H1 (cell line): ENCODE measurements at regions of chr1 and their contacts with region 1.

Region 1: DNA sequence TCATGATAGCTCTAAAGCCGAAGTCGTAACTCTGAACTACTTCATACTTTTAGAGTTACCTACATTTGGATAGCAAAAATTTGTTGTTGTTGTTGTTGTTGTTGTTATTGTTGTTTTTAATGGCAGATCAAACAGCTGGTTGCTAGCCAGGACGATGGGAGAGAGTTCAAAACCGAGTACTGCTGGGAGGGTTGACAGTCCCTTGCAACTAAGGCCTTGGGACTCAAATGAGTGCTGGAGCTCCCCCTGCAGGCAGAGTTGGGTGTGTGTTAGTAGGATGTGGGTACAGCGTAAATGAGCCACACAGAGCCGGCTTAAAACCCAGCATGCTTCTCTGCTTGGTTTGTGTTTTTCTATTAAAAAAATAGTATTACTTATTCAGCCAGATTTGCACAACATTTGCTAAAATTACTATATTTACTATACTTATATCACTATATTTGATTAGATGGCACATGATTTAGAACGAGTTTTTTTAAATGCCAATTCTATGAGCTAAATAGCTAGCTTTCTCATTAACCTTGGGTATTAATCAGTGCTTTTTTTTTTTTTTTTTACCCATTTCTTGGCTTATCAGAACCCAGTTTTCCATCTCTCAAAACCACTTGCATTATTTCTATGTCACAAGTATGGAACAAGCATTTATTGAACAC is 129.2 kb upstream of the SYT6 start:
- DNase-seq: peak; percentile 70 to 93
- H3K4me3 ChIP-seq: no peak overlapping the region
- H3K27ac ChIP-seq: no peak overlapping the region
- H3K4me1 ChIP-seq: peaks cover 0 to 9% (median 2%) of the 10 kb centered on the region in 4 experiments; a peak in 3 of 7 replicates
- H3K27me3 ChIP-seq: no peaks in the 10 kb centered on the region
- CTCF ChIP-seq: peak; percentile 86 to 95 (median 93)
- EP300 ChIP-seq: no peak
- POLR2A ChIP-seq: no peak
- RAD21 ChIP-seq: peak; percentile 90 to 95

Region 2: DNA sequence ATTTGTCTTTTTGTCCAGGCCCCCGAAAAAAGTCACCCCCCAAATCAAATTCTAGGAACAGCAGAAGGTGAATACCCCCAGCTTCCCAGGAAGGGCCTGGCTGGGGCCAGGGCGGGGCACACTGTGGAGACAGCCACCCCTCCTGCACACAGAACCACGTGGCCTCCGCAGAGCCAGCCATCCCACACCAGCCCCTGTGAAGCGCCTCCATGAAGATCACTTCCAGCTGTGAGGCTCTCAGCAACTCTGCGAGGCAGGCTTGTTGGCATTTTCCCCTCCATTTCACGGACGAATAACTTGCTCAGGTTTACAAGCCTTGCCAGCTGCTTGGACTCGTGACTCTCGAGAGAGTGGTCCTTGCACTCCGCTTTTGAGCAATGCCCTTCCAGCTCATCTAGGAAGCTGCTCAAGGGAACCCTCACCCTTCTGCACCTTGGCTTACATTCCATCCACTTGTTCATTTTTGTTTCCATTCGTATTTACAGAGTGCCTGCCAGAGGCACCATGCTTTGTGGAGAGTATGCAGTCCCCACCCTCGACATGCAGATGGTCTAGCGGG is 177.4 kb before region 1 on chr1:
- CTCF ChIA-PET with region 1: interaction called, 10 read pairs
- POLR2A ChIA-PET with region 1: no interaction called
- DNase-seq: no peak
- H3K4me3 ChIP-seq: no peak overlapping the region
- H3K27ac ChIP-seq: no peak overlapping the region
- H3K4me1 ChIP-seq: peaks cover 0 to 12% (median 7%) of the 10 kb centered on the region in 4 experiments
- H3K27me3 ChIP-seq: no peaks in the 10 kb centered on the region; a peak in 1 of 7 replicates
- CTCF ChIP-seq: no peak
- EP300 ChIP-seq: no peak
- POLR2A ChIP-seq: no peak
- RAD21 ChIP-seq: no peak

Region 3: GRCh38 chr1:114134518-114134917 is 148.4 kb before region 1 on chr1:
- CTCF ChIA-PET with region 1: interaction called, 17 read pairs
- POLR2A ChIA-PET with region 1: no interaction called
- DNase-seq: no peak
- H3K4me3 ChIP-seq: no peak overlapping the region
- H3K27ac ChIP-seq: no peak overlapping the region
- H3K4me1 ChIP-seq: peaks cover 0 to 8% (median 4%) of the 10 kb centered on the region in 4 experiments; a peak in 2 of 7 replicates
- H3K27me3 ChIP-seq: no peaks in the 10 kb centered on the region
- CTCF ChIP-seq: no peak
- EP300 ChIP-seq: no peak
- POLR2A ChIP-seq: no peak
- RAD21 ChIP-seq: no peak

Region 4: GRCh38 chr1:114152508-114153260 is 130.2 kb before region 1 on chr1:
- CTCF ChIA-PET with region 1: interaction called, 10 read pairs
- POLR2A ChIA-PET with region 1: interaction called, 3 read pairs
- DNase-seq: peak in 1 of 2 experiments; percentile 71
- H3K4me3 ChIP-seq: peak overlapping the region; percentile 79 to 85 (median 82)
- H3K27ac ChIP-seq: no peak overlapping the region
- H3K4me1 ChIP-seq: peaks cover 9 to 45% (median 22%) of the 10 kb centered on the region in 4 experiments
- H3K27me3 ChIP-seq: peaks cover 0 to 22% (median 20%) of the 10 kb centered on the region in 4 experiments; a peak in 6 of 7 replicates
- CTCF ChIP-seq: no peak
- EP300 ChIP-seq: no peak
- POLR2A ChIP-seq: no peak
- RAD21 ChIP-seq: 0 out of 4 replicates have a peak, but pooled peaks of 1 of the 2 experiments have one; percentile 4

Region 5: DNA sequence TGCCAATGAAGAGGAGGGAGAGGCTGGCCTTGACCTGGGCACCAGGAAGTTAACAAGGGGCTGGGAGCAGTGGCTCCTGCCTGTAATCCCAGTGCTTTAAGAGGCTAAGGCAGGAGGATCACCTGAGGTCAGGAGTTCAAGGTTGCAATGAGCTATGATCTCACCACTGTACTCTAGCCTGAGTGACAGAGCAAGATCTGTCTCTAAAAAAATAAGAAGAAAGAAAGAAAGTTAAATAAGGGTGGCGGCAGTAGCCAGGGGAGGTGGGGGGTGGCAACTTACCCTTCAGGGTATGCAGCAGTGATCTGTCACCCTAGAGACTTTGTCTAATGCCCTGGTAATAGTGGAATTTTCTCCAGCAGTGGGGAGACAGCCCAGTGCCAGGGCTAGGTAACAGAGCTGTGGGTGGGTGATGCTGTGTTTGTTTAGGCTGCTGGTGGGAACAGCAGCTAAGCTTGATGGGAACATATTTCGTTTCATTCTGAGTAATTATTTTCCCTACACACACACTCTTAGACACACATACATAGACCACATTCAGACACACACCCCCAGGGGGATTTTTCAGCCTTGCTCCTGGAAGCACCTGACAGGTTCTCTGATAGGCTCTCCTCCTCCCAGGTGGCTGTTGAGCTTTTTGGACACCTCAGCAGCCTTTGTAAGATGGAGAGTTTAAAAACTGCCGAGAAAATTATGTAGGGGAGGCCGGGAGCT is 117.9 kb before region 1 on chr1:
- CTCF ChIA-PET with region 1: interaction called, 15 read pairs
- POLR2A ChIA-PET with region 1: no interaction called
- DNase-seq: no peak
- H3K4me3 ChIP-seq: no peak overlapping the region
- H3K27ac ChIP-seq: no peak overlapping the region
- H3K4me1 ChIP-seq: peaks cover 0 to 3% (median 0%) of the 10 kb centered on the region in 4 experiments; a peak in 2 of 7 replicates
- H3K27me3 ChIP-seq: peaks cover 0 to 3% (median 0%) of the 10 kb centered on the region in 4 experiments; a peak in 1 of 7 replicates
- CTCF ChIP-seq: no peak
- EP300 ChIP-seq: no peak
- POLR2A ChIP-seq: no peak
- RAD21 ChIP-seq: no peak

Region 6: DNA sequence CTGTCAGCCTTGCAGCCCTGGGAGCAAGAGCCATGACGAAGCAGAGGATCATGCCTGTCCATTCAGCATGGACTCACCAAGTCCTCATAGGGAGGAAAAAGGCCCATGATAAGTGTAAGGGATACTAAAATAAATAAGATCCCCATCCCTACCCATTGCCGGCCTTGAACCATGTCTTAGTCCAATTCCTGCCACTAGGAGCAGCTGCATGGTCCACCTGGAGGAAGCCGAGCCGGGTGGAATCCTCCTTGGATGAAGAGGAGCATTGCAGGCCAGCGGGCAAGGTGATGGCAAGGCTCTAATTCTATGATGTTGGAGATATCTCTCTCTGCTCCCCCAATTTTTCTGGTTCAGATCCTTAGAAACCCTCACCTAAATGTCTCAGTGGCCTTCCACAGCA is 90.5 kb before region 1 on chr1:
- CTCF ChIA-PET with region 1: interaction called, 11 read pairs
- POLR2A ChIA-PET with region 1: no interaction called
- DNase-seq: no peak
- H3K4me3 ChIP-seq: no peak overlapping the region
- H3K27ac ChIP-seq: no peak overlapping the region
- H3K4me1 ChIP-seq: peaks cover 0 to 3% (median 0%) of the 10 kb centered on the region in 4 experiments; a peak in 2 of 7 replicates
- H3K27me3 ChIP-seq: peaks cover 0 to 1% (median 0%) of the 10 kb centered on the region in 4 experiments; a peak in 2 of 7 replicates
- CTCF ChIP-seq: peak in 1 of 3 experiments; percentile 39; a peak in 2 of 4 replicates
- EP300 ChIP-seq: no peak
- POLR2A ChIP-seq: no peak
- RAD21 ChIP-seq: peak in 1 of 2 experiments; percentile 25; a peak in 1 of 4 replicates

Region 7: DNA sequence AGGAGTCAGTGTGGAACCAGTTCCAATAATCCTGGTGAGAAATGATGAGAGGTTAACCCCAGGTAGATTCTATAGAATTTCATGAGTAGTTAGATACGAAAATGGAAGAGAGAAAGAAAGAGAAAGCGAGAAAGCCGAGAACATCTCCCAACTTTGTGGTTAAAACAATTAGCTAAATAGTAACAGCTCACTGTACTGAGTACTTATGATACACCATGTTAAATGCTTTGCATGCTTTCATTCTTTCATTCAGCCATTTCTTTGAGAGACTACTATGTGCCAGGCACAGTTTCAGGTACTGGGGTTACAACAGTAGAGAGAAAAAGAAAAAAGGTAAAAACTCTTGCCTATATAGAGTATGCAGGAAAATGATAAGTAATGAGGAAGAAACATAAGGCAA is 19.5 kb before region 1 on chr1:
- CTCF ChIA-PET with region 1: interaction called, 14 read pairs
- POLR2A ChIA-PET with region 1: no interaction called
- DNase-seq: no peak
- H3K4me3 ChIP-seq: no peak overlapping the region
- H3K27ac ChIP-seq: no peak overlapping the region
- H3K4me1 ChIP-seq: no peaks in the 10 kb centered on the region; a peak in 1 of 7 replicates
- H3K27me3 ChIP-seq: peaks cover 0 to 3% (median 0%) of the 10 kb centered on the region in 4 experiments; a peak in 2 of 7 replicates
- CTCF ChIP-seq: no peak
- EP300 ChIP-seq: no peak
- POLR2A ChIP-seq: no peak
- RAD21 ChIP-seq: no peak

Region 8: DNA sequence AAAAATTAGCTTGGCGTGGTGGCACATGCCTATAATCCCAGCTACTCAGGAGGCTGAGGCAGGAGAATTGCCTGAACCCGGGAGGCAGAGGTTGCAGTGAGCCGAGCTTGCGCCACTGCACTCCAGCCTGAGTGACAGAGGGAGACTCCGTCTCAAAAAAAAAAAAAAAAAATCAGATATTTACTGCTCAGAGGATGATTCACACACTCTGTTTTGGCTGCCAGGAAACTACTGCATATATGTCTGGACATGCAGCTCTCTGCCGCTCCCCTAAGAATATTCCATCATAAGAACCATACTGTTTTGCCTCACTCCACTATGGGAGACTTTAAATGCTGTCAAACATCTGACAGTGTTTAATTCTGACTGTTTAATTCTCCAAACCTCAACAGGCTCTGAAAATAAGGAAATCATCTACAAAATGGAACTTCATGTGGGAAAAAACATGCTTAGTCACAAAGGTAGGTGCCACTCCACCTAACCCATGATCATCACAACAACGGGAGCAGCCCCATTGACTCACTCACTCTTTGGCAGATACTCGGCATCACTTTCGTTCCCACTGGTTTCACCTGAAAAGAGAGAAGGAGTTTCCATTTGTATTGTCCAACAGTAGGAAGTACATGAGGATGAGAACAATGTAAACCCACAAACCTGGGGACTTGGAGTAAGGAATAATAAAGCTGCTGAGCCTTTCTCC is 327.8 kb after region 1 on chr1:
- CTCF ChIA-PET with region 1: no interaction called
- POLR2A ChIA-PET with region 1: no interaction called
- DNase-seq: no peak
- H3K4me3 ChIP-seq: no peak overlapping the region
- H3K27ac ChIP-seq: no peak overlapping the region
- H3K4me1 ChIP-seq: no peaks in the 10 kb centered on the region
- H3K27me3 ChIP-seq: no peaks in the 10 kb centered on the region
- CTCF ChIP-seq: no peak
- EP300 ChIP-seq: no peak
- POLR2A ChIP-seq: no peak
- RAD21 ChIP-seq: no peak